SK-N-SH (cell line): ENCODE measurements at regions of chr22 and their contacts with region 1.

Region 1: GRCh38 chr22:42296381-42296853 is 26.0 kb upstream of the TCF20 start:
- DNase-seq: peak; percentile 90
- H3K4me3 ChIP-seq: no peak overlapping the region
- H3K27ac ChIP-seq: no peak overlapping the region
- H3K4me1 ChIP-seq: peaks cover 0 to 18% of the 10 kb centered on the region in 2 experiments; a peak in 2 of 4 replicates
- H3K27me3 ChIP-seq: no peaks in the 10 kb centered on the region
- CTCF ChIP-seq: peak; percentile 28; the same call in 1 of the 2 replicates
- EP300 ChIP-seq: peak in 1 of 2 experiments; percentile 69; a peak in 2 of 4 replicates
- RAD21 ChIP-seq: peak; percentile 55

Region 2: DNA sequence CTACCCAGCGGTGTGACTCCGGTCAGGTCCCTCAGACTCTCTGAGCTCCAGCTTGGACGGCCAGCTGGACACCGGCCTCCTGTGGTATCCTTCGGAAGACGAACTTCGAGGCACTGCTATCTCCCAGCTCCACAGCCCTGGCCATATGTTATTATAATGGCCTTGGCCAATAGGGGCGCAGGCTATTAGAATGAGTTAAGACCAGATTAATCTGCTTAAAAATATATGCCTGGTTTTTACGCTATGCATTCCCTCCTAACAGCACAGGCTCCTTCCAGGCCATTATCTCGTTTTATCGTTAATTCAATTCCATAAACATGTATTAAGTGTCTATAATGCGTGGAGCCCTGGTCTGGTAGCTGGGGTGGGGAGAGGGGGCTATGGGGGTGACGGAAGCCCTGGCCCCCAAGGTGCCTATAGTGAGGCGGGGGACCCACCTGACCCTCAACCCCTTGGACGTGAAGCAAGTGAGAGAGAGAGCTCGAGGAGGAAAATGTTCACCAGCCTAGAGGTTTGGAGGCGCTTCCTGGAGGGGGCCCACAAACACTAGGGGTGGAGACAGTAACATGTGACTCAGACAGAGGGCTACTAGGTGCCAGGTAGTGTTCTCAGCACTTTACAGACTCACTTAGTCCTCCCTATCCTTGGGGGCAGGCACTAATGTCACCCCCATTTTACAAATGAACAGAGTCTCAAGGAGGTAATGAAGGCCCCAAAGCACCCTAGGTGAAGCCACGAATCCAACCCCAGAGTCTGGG is 11.6 kb after region 1 on chr22:
- CTCF ChIA-PET with region 1: interaction called, 20 read pairs
- POLR2A ChIA-PET with region 1: no interaction called
- DNase-seq: peak; percentile 66
- H3K4me3 ChIP-seq: no peak overlapping the region
- H3K27ac ChIP-seq: peak overlapping the region in 1 of 2 experiments; percentile 34; a peak in 2 of 4 replicates
- H3K4me1 ChIP-seq: peaks cover 0 to 21% of the 10 kb centered on the region in 2 experiments; a peak in 1 of 4 replicates
- H3K27me3 ChIP-seq: no peaks in the 10 kb centered on the region
- CTCF ChIP-seq: no peak
- EP300 ChIP-seq: peak in 1 of 2 experiments; percentile 68; a peak in 1 of 4 replicates
- RAD21 ChIP-seq: no peak

Region 3: DNA sequence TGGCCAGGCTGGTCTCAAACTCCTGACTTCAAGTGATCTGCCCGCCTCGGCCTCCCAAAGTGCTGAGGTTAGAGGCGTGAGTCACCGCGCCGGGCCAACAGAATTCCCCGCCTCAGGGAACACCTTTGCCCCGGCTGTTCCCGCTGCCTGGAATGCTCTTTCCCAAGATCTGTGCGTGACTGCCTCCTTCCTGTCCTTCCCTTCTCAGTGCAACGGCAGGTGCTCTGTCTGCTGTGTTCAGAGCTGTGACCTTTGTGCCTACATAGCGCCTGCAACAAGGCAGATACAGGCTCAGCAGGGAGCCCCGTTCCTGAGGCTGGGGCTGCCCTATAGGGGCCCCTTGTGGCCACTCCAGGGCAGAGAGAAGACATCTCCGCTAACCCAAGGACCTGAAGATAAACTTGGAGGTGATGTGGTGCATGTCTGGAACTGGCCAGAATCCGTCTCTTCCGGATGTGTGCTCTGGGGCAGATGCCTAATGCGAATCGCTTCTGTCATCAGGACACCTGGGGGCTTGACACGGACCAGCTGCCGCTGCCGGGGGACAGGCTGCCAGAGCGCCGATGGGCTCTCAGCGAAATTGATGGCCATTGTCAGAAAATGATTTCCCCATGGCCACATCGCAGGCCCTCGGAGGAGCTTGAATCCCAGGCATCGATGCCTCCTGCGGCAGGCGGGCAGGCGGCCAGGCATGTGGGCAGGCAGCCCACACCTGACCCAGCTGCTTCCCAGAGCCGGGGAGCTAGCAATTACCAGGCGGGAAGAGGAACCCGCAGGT is 17.6 kb after region 1 on chr22:
- CTCF ChIA-PET with region 1: interaction called, 10 read pairs
- POLR2A ChIA-PET with region 1: no interaction called
- DNase-seq: peak; percentile 77
- H3K4me3 ChIP-seq: no peak overlapping the region
- H3K27ac ChIP-seq: no peak overlapping the region; a peak in 1 of 4 replicates
- H3K4me1 ChIP-seq: peaks cover 0 to 34% of the 10 kb centered on the region in 2 experiments; a peak in 1 of 4 replicates
- H3K27me3 ChIP-seq: no peaks in the 10 kb centered on the region
- CTCF ChIP-seq: peak; percentile 32
- EP300 ChIP-seq: peak in 1 of 2 experiments; percentile 69; a peak in 1 of 4 replicates
- RAD21 ChIP-seq: peak; percentile 39

Region 4: DNA sequence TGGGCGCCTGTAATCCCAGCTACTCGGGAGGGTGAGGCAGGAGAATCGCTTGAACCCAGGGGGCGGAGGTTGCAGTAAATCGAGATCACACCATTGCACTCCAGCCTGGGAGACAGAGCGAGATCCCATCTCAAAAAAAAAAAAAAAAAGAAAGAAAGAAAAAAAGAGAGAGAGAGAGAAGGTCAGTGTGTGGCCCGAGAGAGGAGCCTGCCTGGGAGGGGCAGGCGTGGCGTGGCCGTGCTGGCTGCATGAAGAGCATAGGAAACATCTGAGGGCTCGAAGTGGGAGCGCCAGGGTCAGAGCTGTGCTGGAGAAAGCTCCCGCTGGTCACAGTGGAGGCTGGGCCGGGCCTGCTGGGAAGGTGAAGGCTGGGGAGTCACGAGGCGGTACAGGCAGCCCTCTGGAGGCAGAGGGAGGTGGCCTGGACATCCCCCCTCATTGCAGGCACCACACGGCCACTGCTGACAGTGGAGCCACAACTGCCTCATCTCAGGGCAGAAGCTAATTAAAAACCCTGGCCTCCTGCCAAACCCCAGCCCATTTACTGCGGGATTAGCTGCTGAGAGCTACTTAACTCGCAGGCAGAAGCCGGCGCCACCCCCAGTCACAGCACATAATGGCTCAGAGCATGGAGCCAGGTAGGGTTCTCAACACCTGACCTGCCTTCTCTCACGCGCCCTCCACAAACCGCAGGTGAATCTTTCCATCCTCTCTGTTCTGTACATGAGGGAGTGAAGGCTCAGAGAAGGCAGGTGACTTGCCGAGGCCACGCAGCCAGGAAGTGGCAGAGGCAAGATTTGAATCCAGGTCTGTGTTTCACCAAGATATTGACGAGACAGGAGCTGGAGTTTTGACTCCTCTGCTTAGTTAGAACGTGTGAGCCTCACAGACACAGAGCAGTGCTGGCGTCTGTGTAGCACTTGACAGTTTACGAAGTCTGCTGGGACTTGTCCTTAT is 103.2 kb after region 1 on chr22:
- CTCF ChIA-PET with region 1: no interaction called
- POLR2A ChIA-PET with region 1: no interaction called
- DNase-seq: peak; percentile 81
- H3K4me3 ChIP-seq: no peak overlapping the region
- H3K27ac ChIP-seq: no peak overlapping the region
- H3K4me1 ChIP-seq: peaks cover 0 to 14% of the 10 kb centered on the region in 2 experiments; a peak in 2 of 4 replicates
- H3K27me3 ChIP-seq: no peaks in the 10 kb centered on the region
- CTCF ChIP-seq: no peak
- EP300 ChIP-seq: no peak
- RAD21 ChIP-seq: peak; percentile 38